Caco-2 (cell line): ENCODE measurements at regions of chr6 and their contacts with region 1.

Region 1: DNA sequence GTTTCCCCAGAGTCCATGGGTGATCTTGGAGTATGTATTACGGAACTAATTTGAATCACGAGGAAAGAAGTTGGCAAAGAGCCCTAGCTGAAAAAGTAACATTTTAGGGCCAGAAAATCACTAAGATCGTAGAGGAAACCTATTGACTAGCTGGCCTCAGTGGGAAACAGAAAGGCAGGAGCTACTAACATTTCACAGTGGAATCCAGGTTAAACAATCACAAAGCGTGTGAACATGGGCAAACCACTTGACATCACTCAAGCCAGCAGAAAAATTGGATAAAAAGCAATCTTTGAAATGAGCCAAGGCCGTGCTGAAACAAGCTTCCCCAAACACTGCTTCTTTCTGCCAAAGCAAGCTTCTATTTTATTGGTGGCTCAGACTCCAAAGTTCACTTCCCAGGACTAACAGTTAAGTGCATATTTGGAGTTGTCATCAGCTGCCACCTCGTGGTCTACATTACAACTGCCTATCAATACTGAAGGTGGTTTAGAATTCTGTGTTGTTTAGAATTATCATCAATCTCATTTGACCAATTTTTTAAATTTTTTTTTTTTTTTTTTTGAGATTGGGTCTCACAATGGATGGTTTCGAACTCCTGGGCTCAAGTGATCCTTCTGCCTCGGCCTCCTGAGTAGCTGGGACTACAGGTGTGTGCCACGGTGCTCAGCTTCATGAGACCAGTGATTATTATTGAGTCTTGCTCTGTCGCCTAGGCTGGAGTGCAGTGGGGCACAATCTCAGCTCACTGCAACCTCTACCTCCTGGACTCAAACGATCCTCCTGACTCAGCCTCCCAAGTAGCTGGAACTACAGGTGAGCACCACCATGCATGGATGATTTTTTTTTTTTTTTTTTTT is 10.6 kb downstream of the RPS10 start:
- DNase-seq: peak; percentile 69 to 72
- H3K4me3 ChIP-seq: no peak overlapping the region
- H3K4me3 Mint-ChIP-seq: no peak overlapping the region
- H3K27ac Mint-ChIP-seq: peak overlapping the region; percentile 48
- H3K4me1 ChIP-seq: peaks cover 5% of the 10 kb centered on the region
- H3K4me1 Mint-ChIP-seq: no peaks in the 10 kb centered on the region
- H3K27me3 ChIP-seq: no peaks in the 10 kb centered on the region
- H3K27me3 Mint-ChIP-seq: no peaks in the 10 kb centered on the region
- CTCF ChIP-seq: peak; percentile 49 to 68

Region 2: DNA sequence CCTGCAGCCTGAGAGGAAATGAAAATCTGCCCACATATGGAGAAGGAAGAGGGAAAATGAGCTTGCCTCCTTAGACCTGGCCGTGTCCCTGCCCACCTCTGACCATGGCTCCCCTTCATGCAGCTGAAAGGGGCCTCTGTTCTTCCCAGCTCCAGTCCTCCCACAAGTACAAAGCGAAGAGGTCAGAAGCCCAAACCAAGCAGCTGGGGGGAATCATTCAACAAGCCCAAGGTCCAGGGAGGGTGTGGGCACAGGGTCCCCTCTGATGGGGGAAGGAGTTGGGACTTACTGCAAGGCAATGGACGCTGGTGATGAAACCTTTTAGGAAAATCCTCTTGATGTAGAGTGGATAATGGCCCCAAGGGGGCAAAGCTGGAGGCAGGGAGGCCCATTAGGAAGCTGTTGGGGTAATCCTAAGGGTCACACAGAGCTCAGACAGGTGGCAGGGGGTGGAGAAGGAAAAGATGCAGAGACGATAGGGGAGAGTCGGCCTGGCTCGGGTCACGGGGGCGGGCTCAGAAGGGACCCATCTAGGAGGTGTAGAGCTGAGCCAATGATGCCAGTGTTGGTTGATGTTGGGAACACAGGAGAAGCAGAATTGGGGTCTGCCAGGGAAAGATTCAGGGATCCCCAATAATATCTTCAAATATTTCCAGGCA is 253.2 kb before region 1 on chr6:
- CTCF ChIA-PET with region 1: interaction called, 16 read pairs
- POLR2A ChIA-PET with region 1: no interaction called
- intact Hi-C with region 1: loop called (anchors 1 kb)
- DNase-seq: no peak
- H3K4me3 ChIP-seq: no peak overlapping the region
- H3K4me3 Mint-ChIP-seq: no peak overlapping the region
- H3K27ac Mint-ChIP-seq: no peak overlapping the region
- H3K4me1 ChIP-seq: no peaks in the 10 kb centered on the region
- H3K4me1 Mint-ChIP-seq: no peaks in the 10 kb centered on the region
- H3K27me3 ChIP-seq: no peaks in the 10 kb centered on the region
- H3K27me3 Mint-ChIP-seq: peaks cover 12% of the 10 kb centered on the region
- CTCF ChIP-seq: no peak

Region 3: GRCh38 chr6:34202329-34203201 is 212.7 kb before region 1 on chr6:
- CTCF ChIA-PET with region 1: interaction called, 10 read pairs
- POLR2A ChIA-PET with region 1: no interaction called
- intact Hi-C with region 1: no loop called
- DNase-seq: no peak
- H3K4me3 ChIP-seq: no peak overlapping the region
- H3K4me3 Mint-ChIP-seq: no peak overlapping the region
- H3K27ac Mint-ChIP-seq: no peak overlapping the region
- H3K4me1 ChIP-seq: no peaks in the 10 kb centered on the region
- H3K4me1 Mint-ChIP-seq: no peaks in the 10 kb centered on the region
- H3K27me3 ChIP-seq: no peaks in the 10 kb centered on the region
- H3K27me3 Mint-ChIP-seq: no peaks in the 10 kb centered on the region
- CTCF ChIP-seq: no peak

Region 4: DNA sequence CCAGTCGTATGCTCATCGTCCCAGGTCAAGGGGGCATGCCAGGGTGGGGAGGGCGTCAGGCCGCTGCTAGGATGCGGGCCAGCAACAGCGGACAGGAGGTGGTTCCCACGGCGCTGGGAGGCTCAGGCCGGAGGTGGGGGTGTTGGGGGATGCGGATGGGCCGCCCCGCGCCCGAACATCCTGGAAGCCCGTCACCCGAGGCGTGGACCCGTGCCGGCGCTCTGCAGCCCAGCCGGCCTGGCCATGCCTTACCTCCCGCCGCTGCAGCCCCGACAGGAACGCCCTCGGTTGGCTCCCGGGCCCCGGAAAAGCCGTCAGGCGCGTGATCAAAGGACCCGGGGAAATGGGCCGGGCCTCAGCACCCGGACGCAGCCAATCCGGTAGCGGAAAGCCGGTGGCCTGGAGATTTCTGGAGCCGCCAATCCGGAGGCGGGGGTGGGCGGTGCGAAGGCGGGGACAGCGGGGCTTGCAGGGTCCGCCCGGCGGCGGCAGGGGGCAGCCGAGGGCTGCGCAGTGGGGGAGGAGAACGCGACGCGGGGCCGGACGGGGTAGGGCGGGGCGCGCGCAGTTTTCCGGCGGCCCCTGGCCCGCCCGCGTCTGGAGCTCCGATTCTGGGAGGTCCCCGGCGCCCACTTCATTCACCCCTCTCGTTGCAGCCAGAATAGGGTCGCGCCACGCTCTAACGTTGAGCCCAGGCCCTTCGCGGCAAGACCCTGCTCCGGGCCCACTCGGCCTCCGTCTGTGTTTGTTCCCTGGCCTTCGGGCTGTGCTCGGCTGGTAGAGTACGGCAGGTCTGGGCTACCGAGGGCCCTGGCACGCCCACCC is 166.3 kb before region 1 on chr6 and contains the start of gene SMIM29:
- CTCF ChIA-PET with region 1: interaction called, 115 read pairs
- POLR2A ChIA-PET with region 1: interaction called, 17 read pairs
- intact Hi-C with region 1: loop called (anchors 1 kb)
- DNase-seq: peak; percentile 95 to 97
- H3K4me3 ChIP-seq: peak within 1 kb of the TSS; percentile 85
- H3K4me3 Mint-ChIP-seq: peak within 1 kb of the TSS; percentile 87
- H3K27ac Mint-ChIP-seq: peak within 1 kb of the TSS; percentile 89
- H3K4me1 ChIP-seq: peaks cover 8% of the 10 kb centered on the region; the same call in 1 of the 2 replicates
- H3K4me1 Mint-ChIP-seq: peaks cover 7% of the 10 kb centered on the region
- H3K27me3 ChIP-seq: no peaks in the 10 kb centered on the region
- H3K27me3 Mint-ChIP-seq: no peaks in the 10 kb centered on the region
- CTCF ChIP-seq: peak; percentile 77 to 95
- total RNA-seq, gene SMIM29: 14.3 and 16.0 TPM in 2 replicates

Region 5: GRCh38 chr6:34392497-34393190 is 22.6 kb before region 1 on chr6 and contains the start of gene NUDT3:
- CTCF ChIA-PET with region 1: interaction called, 23 read pairs
- POLR2A ChIA-PET with region 1: no interaction called
- intact Hi-C with region 1: loop called (anchors 2 kb)
- DNase-seq: peak; percentile 87 to 93
- H3K4me3 ChIP-seq: peak within 1 kb of the TSS; percentile 81
- H3K4me3 Mint-ChIP-seq: no peak within 1 kb of the TSS
- H3K27ac Mint-ChIP-seq: no peak within 1 kb of the TSS
- H3K4me1 ChIP-seq: no peaks in the 10 kb centered on the region
- H3K4me1 Mint-ChIP-seq: no peaks in the 10 kb centered on the region
- H3K27me3 ChIP-seq: no peaks in the 10 kb centered on the region
- H3K27me3 Mint-ChIP-seq: no peaks in the 10 kb centered on the region
- CTCF ChIP-seq: peak; percentile 73 to 91
- total RNA-seq, gene NUDT3: 22.3 and 22.9 TPM in 2 replicates

Region 6: GRCh38 chr6:34610819-34611477 is 195.7 kb after region 1 on chr6:
- CTCF ChIA-PET with region 1: interaction called, 13 read pairs
- POLR2A ChIA-PET with region 1: no interaction called
- intact Hi-C with region 1: no loop called
- DNase-seq: no peak
- H3K4me3 ChIP-seq: no peak overlapping the region
- H3K4me3 Mint-ChIP-seq: no peak overlapping the region
- H3K27ac Mint-ChIP-seq: peak overlapping the region; percentile 89
- H3K4me1 ChIP-seq: peaks cover 35% of the 10 kb centered on the region
- H3K4me1 Mint-ChIP-seq: peaks cover 9% of the 10 kb centered on the region
- H3K27me3 ChIP-seq: no peaks in the 10 kb centered on the region
- H3K27me3 Mint-ChIP-seq: no peaks in the 10 kb centered on the region
- CTCF ChIP-seq: no peak